Naive thymus-derived CD4-positive, alpha-beta T cell (primary cell): ENCODE measurements at regions of chr15 and their contacts with region 1.

Region 1: DNA sequence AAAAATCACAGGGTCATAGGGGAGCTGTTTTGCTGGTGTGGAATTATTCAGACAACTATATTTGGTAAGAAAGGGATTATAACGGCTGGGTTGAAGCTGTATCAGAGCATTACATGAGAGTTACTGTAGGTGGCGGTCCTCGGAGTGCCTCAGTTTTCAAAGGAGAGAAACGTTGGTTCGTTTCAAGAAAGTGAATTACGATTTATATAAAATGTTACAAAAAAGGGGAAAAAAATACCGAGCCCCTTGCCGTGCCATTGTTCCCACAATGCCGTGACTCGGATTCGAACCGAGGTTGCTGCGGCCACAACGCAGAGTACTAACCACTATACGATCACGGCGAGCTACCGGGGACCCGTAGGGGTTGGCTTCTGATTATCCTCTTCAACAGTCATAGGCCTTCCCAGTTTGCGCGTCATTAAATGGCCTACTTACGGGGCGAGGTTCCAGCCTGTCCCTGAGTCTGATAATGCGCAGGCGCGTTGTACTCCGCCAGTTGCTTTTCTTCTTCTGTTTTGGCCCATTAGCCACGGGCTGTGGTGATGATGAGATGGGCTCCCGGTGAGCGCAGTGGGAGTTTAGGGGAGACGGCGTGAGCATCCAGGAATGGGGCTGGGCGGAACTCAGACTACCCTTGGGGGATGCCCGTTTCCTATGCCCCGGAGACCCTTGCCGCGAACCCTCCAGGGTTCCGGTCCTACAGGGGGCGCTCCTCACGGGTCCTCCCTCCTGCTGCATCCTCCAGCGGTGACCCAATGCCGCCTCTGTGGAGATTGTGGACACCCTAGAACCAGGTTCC is 10.8 kb upstream of the SHF start:
- DNase-seq: peak; percentile 82 to 98 (median 98)
- ATAC-seq: peak; percentile 80
- H3K4me3 ChIP-seq: peak overlapping the region; percentile 69
- H3K4me3 Mint-ChIP-seq: no peak overlapping the region
- H3K27ac ChIP-seq: peak overlapping the region; percentile 90
- H3K27ac Mint-ChIP-seq: no peak overlapping the region
- H3K4me1 ChIP-seq: peaks cover 9 to 10% of the 10 kb centered on the region in 2 donors
- H3K4me1 Mint-ChIP-seq: peaks cover 0 to 16% (median 8%) of the 10 kb centered on the region in 7 donors
- H3K27me3 ChIP-seq: no peaks in the 10 kb centered on the region
- H3K27me3 Mint-ChIP-seq: peaks cover 0 to 11% (median 0%) of the 10 kb centered on the region in 5 donors

Region 2: DNA sequence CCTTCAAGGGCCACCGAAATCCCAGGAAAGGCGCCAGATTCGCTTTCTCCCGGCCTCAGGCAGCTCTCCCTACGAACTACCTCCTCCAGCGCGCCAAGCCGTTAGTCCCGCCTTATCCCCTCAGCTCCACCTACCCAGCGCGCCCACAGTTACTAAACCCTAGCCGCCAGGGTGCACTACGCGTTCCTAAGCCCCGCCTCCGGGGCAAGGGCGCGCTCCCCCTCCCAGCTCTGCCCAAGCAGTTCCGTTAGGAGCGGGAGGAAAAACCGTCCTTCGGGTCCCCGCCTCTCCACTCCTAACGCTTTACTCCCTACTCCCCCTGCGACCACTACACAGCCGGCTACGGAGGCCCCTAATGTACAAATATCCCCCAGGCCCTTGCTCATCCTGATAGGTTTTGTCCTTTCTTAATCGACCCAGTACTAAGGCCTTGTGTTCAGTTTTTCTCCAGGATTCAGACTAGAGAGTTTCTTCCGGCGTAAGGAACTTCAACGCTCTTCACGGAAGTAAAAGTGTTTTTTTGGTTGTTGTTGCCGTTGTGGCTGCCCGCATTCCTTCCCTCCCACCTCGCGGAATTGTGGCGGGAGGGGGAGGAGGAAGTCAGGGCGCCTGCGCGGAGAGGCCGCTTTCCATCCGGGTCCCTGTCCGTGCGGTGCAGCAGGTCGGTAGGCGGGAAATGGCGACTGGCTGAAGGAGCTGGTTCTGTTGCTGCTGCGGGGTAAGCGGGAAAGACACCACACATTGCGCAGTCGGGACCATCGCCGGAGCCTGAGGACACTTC is 771.4 kb before region 1 on chr15 and contains the start of gene CTDSPL2:
- CTCF ChIA-PET with region 1: no interaction called
- POLR2A ChIA-PET with region 1: no interaction called
- intact Hi-C with region 1: loop called (anchors 2 to 5 kb)
- DNase-seq: peak; percentile 87 to 98 (median 94)
- ATAC-seq: peak; percentile 98
- H3K4me3 ChIP-seq: peak within 1 kb of the TSS; percentile 94
- H3K4me3 Mint-ChIP-seq: peak within 1 kb of the TSS; percentile 95 to 99 (median 98)
- H3K27ac ChIP-seq: peak within 1 kb of the TSS; percentile 94
- H3K27ac Mint-ChIP-seq: peak within 1 kb of the TSS; percentile 98 to 100 (median 99)
- H3K4me1 ChIP-seq: peaks cover 10% of the 10 kb centered on the region in 2 donors
- H3K4me1 Mint-ChIP-seq: peaks cover 35 to 65% (median 51%) of the 10 kb centered on the region in 7 donors
- H3K27me3 ChIP-seq: no peaks in the 10 kb centered on the region
- H3K27me3 Mint-ChIP-seq: peaks cover 0 to 2% (median 0%) of the 10 kb centered on the region in 5 donors
- total RNA-seq, gene CTDSPL2: 60.3 to 81.8 (median 77.3) TPM

Region 3: GRCh38 chr15:44711356-44712107 is 487.0 kb before region 1 on chr15 and contains the start of gene B2M:
- CTCF ChIA-PET with region 1: no interaction called
- POLR2A ChIA-PET with region 1: no interaction called
- intact Hi-C with region 1: loop called in 1 of 2 experiments (anchors 5 kb)
- DNase-seq: peak; percentile 95 to 98 (median 97)
- ATAC-seq: peak; percentile 84
- H3K4me3 ChIP-seq: peak within 1 kb of the TSS; percentile 83
- H3K4me3 Mint-ChIP-seq: peak within 1 kb of the TSS; percentile 93 to 100 (median 98)
- H3K27ac ChIP-seq: peak within 1 kb of the TSS; percentile 95
- H3K27ac Mint-ChIP-seq: peak within 1 kb of the TSS; percentile 98 to 100 (median 100)
- H3K4me1 ChIP-seq: peaks cover 15 to 26% of the 10 kb centered on the region in 2 donors
- H3K4me1 Mint-ChIP-seq: peaks cover 31 to 76% (median 54%) of the 10 kb centered on the region in 7 donors
- H3K27me3 ChIP-seq: no peaks in the 10 kb centered on the region
- H3K27me3 Mint-ChIP-seq: peaks cover 0 to 17% (median 0%) of the 10 kb centered on the region in 5 donors
- total RNA-seq, gene B2M: 4,325 to 8,698 (median 6,221) TPM

Region 4: DNA sequence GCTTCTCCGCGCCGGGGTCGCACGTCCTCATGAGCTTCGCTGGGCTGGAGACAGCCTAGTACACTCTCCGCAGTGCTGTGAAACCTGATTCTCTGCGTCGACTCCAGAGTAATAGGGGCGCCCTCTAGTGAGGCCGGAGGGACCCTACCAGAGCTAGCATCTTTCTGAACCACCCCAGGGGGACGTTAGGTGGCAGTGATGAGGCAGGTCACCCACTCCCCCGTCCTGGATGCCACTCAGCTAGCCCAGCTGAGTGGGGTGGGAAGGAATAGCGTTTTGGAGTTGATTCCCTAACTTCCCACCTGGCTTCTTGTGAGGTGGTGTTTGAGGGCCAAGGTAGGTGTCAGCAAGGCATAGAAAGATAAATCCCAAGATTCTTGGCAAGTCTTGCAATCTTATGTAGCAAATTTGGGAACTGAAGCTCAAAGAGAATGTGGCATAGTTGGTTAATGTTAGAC is 80.4 kb before region 1 on chr15:
- CTCF ChIA-PET with region 1: no interaction called
- POLR2A ChIA-PET with region 1: interaction called, 3 read pairs
- intact Hi-C with region 1: loop called (anchors 2 to 10 kb)
- DNase-seq: peak; percentile 64 to 86 (median 81)
- ATAC-seq: peak; percentile 99
- H3K4me3 ChIP-seq: peak overlapping the region; percentile 34
- H3K4me3 Mint-ChIP-seq: peak overlapping the region; percentile 69 to 91 (median 82)
- H3K27ac ChIP-seq: no peak overlapping the region
- H3K27ac Mint-ChIP-seq: peak overlapping the region in 1 of 9 donors; percentile 47
- H3K4me1 ChIP-seq: peaks cover 0 to 35% of the 10 kb centered on the region in 2 donors
- H3K4me1 Mint-ChIP-seq: peaks cover 19 to 42% (median 33%) of the 10 kb centered on the region in 7 donors
- H3K27me3 ChIP-seq: peaks cover 4 to 27% of the 10 kb centered on the region in 2 donors
- H3K27me3 Mint-ChIP-seq: peaks cover 50 to 82% (median 65%) of the 10 kb centered on the region in 5 donors

Region 5: GRCh38 chr15:45187894-45188830 is 10.4 kb before region 1 on chr15 and contains the start of gene SHF:
- CTCF ChIA-PET with region 1: interaction called, 4 read pairs
- POLR2A ChIA-PET with region 1: interaction called, 177 read pairs
- intact Hi-C with region 1: loop called (anchors 1 kb)
- DNase-seq: peak; percentile 38 to 83 (median 57)
- ATAC-seq: peak; percentile 81
- H3K4me3 ChIP-seq: peak within 1 kb of the TSS; percentile 76
- H3K4me3 Mint-ChIP-seq: peak within 1 kb of the TSS; percentile 84 to 97 (median 92)
- H3K27ac ChIP-seq: peak within 1 kb of the TSS; percentile 92
- H3K27ac Mint-ChIP-seq: peak within 1 kb of the TSS; percentile 77 to 95 (median 89)
- H3K4me1 ChIP-seq: peaks cover 3 to 5% of the 10 kb centered on the region in 2 donors
- H3K4me1 Mint-ChIP-seq: peaks cover 11 to 27% (median 20%) of the 10 kb centered on the region in 7 donors
- H3K27me3 ChIP-seq: no peaks in the 10 kb centered on the region
- H3K27me3 Mint-ChIP-seq: peaks cover 0 to 25% (median 2%) of the 10 kb centered on the region in 5 donors
- total RNA-seq, gene SHF: 3.5 to 8.7 (median 6.2) TPM

Region 6: DNA sequence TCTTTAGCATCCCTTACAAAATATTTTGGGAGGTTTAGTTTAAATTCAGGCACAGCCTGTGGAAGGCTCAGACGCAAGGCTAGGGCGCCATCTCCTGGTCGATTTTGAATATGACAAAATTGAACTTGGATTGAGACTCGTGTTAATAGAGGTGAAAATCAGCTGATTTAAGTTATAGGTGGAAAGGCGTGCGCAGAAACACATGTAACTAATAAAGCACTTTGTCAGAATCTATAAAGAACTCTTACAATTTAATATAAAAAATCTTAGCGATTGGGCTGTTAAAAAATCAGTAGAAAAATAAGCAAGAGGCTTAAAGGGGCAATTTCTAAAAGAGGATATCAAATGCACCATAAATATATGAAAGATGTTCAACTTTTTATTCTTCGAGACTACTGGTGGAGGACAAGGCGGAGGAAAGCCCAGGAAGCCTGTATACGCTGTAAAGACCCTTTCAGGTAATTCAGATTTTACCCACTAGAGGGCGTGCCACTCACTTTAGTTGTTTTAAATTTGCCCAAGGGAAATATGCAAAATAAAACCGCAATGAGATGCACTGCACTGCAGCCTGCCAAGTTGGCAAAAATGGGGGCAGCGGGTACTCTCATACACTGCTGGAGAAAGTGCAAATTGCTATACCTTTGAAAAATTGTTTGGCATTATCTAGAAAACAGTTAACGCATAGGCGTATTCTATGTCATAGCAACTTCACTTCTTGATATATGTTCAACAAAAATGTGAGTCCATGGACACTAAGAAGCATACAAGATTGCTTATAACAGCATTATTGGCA is 259.3 kb after region 1 on chr15:
- CTCF ChIA-PET with region 1: no interaction called
- POLR2A ChIA-PET with region 1: no interaction called
- intact Hi-C with region 1: loop called (anchors 1 kb)
- DNase-seq: peak; percentile 33 to 85 (median 81)
- ATAC-seq: peak; percentile 77
- H3K4me3 ChIP-seq: peak overlapping the region; percentile 58
- H3K4me3 Mint-ChIP-seq: peak overlapping the region; percentile 80 to 95 (median 90)
- H3K27ac ChIP-seq: peak overlapping the region; percentile 68
- H3K27ac Mint-ChIP-seq: peak overlapping the region; percentile 74 to 92 (median 83)
- H3K4me1 ChIP-seq: peaks cover 16 to 33% of the 10 kb centered on the region in 2 donors
- H3K4me1 Mint-ChIP-seq: peaks cover 25 to 60% (median 40%) of the 10 kb centered on the region in 7 donors
- H3K27me3 ChIP-seq: no peaks in the 10 kb centered on the region
- H3K27me3 Mint-ChIP-seq: no peaks in the 10 kb centered on the region

Region 7: GRCh38 chr15:45634442-45635190 is 436.1 kb after region 1 on chr15 and contains the start of gene SQOR:
- CTCF ChIA-PET with region 1: no interaction called
- POLR2A ChIA-PET with region 1: interaction called, 7 read pairs
- intact Hi-C with region 1: loop called (anchors 1 to 5 kb)
- DNase-seq: peak; percentile 46 to 78 (median 58)
- ATAC-seq: peak; percentile 72
- H3K4me3 ChIP-seq: peak within 1 kb of the TSS; percentile 84
- H3K4me3 Mint-ChIP-seq: peak within 1 kb of the TSS; percentile 91 to 98 (median 96)
- H3K27ac ChIP-seq: peak within 1 kb of the TSS; percentile 69
- H3K27ac Mint-ChIP-seq: peak within 1 kb of the TSS; percentile 84 to 96 (median 91)
- H3K4me1 ChIP-seq: peaks cover 24 to 27% of the 10 kb centered on the region in 2 donors
- H3K4me1 Mint-ChIP-seq: peaks cover 24 to 46% (median 42%) of the 10 kb centered on the region in 7 donors
- H3K27me3 ChIP-seq: no peaks in the 10 kb centered on the region
- H3K27me3 Mint-ChIP-seq: peaks cover 0 to 13% (median 0%) of the 10 kb centered on the region in 5 donors
- total RNA-seq, gene SQOR: 20.6 to 115 (median 32.6) TPM